RWPE1 (cell line): ENCODE measurements at regions of chr11 and their contacts with region 1.

Region 1: DNA sequence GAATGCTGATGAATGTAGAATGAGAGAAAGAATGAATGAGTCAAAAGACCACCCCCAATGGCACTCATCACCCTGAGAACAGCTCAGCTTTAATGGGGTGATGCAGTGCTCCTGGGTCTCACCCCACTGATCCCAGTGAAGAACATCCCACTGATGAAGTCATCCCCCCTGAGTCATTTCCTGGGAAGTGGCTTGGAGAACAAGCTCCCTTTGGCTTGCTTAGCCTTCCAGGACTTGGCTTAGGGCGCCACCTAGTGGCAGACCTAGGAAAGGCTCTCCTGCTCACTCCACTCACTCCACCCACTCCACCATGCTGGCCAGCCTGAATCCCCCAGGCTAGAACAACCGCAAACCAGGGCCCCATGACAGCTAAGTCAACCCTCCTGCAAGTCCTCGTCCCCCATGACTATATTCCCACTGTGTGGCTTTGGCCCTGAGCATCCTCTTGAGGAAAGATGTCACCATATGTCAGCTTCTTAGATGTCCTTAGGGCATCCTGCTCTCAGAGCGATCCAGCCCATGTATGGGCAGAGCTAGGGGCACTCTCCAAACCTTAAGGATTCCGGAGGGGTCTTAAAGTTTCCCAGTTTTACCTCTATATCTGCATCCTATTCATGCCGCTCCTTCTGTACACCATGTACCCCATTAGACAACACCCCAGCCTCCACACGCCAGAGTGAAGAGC is 17.8 kb upstream of the TMPRSS13 start:
- DNase-seq: peak; percentile 96
- H3K27ac ChIP-seq: no peak overlapping the region
- CTCF ChIP-seq: peak; percentile 89

Region 2: GRCh38 chr11:117426269-117426685 is 520.7 kb before region 1 on chr11:
- CTCF ChIA-PET with region 1: interaction called, 19 read pairs
- POLR2A ChIA-PET with region 1: no interaction called
- DNase-seq: peak; percentile 72
- H3K27ac ChIP-seq: no peak overlapping the region
- CTCF ChIP-seq: peak; percentile 96

Region 3: DNA sequence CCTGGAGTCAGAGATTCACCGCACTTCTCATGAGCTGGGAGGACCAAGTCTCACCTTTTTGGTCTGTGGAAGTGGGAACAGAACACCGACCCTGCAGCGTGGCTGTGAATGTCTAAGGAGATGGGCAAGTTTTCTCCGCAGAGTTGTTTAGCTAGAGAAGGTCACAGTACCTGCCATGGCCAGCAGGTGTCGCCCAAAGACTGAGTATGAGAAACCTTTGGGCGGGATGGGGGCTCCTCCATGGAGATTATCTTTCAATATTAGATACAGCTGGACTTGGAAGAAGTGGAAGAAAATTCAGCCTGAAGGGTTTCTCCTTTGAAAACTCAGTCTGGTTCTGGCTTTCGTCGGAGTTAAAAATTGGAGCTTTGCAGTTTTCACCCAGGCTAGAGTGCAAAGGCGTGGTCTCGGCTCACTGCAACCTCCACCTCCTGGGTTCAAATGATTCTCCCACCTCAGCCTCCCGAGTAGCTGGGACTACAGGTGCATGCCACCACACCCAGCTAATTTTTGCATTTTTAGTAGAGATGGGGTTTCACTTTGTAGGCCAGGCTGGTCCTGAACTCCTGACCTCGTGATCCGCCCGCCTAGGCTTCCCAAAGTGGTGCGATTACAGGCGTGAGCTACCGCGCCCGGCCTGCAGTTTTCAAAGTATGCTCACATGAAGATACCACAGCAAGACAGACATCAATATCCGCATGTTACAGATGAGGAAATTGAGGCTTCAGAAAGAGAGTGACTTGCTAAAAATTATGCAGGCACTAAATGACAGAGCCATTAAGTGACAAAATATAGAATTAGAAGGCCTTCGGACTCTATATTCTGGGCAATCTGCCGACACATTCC is 139.3 kb before region 1 on chr11:
- CTCF ChIA-PET with region 1: interaction called, 12 read pairs
- POLR2A ChIA-PET with region 1: no interaction called
- DNase-seq: peak; percentile 58
- H3K27ac ChIP-seq: no peak overlapping the region
- CTCF ChIP-seq: peak; percentile 76

Region 4: GRCh38 chr11:117817368-117818040 is 129.5 kb before region 1 on chr11:
- CTCF ChIA-PET with region 1: interaction called, 20 read pairs
- POLR2A ChIA-PET with region 1: no interaction called
- DNase-seq: peak; percentile 60
- H3K27ac ChIP-seq: no peak overlapping the region
- CTCF ChIP-seq: peak; percentile 96

Region 5: DNA sequence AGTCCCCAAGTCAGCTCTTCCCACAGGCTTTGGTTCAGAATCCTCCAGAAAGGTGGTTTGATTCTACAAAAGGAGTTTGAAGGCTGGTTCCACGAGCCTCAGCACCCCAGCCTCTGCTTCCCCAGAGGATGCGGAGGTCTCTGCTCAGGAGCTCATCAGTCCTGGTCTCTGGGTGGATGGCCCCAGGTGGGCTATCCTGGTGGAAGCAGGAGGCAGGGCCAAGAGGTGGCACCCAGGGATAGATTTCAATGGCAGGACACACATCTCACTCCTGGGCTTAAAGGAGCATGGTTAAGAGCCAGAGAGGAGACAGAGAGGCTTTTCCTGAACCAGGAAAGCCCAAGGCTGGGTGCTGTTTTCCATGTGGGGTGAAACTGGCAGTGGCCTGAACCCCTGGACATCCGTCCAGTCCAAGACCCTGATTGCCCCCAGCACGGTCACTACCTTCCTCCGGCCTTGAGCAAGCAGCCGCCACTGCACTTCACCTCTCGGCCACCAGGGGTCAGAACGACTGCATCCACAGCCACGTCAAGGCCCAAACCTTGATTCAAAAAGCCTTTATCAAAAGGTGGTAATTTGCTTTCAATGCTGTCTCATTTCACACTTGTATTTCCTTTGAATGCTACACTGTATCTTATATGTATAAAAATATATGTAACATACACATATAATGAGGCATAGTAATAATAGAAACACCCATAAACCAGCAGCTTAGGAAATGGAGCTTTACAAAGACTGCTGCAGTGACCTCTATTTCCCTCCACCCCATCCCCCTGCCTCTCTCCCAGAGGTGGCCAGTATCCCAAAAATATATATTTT is 103.1 kb before region 1 on chr11:
- CTCF ChIA-PET with region 1: interaction called, 60 read pairs
- POLR2A ChIA-PET with region 1: no interaction called
- DNase-seq: peak; percentile 51
- H3K27ac ChIP-seq: no peak overlapping the region
- CTCF ChIP-seq: peak; percentile 94

Region 6: DNA sequence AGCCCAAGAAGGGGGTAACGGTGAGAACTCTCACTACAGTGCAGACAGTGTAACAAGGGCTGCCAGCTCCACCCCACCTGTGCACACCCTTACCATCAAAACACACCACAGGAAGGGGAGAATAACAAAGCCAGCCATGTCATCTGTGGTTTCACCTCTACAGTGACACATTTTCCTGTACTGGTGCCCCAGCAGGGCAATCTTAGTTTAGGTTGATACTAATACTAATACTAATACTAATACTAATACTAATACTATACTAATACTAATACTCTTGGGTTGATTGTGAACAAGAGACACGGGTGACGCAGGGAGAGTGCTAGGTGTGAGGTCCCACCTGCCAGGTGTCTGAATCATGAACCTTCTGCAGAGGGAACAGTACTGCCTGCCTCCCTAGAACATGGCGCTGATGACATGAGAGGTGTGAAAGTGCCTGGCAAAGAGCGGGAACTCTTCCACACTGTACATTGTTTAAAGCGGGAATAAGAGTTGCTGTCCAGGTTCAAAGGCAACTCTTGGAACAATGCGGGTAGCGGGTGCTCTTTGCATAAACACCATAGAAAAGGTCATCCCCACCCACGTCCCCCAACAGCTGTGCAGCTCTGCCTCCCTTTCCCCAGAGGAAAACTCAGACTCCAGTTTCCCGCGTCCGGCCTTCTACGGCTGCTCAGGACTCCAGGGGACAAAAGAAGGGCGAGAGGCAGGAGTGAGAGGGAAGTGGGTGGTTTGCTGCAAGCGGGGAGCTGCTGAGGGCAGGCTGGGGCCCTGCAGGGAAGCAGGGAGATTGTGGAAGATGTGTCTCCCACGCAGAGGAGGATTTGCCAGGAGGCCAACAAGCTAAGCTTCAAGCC is 104.9 kb after region 1 on chr11:
- CTCF ChIA-PET with region 1: interaction called, 21 read pairs
- POLR2A ChIA-PET with region 1: no interaction called
- DNase-seq: no peak
- H3K27ac ChIP-seq: no peak overlapping the region
- CTCF ChIP-seq: no peak